Sciatic nerve (tissue), 2 donors: ENCODE measurements at regions of chrX and their contacts with region 1.

Region 1: DNA sequence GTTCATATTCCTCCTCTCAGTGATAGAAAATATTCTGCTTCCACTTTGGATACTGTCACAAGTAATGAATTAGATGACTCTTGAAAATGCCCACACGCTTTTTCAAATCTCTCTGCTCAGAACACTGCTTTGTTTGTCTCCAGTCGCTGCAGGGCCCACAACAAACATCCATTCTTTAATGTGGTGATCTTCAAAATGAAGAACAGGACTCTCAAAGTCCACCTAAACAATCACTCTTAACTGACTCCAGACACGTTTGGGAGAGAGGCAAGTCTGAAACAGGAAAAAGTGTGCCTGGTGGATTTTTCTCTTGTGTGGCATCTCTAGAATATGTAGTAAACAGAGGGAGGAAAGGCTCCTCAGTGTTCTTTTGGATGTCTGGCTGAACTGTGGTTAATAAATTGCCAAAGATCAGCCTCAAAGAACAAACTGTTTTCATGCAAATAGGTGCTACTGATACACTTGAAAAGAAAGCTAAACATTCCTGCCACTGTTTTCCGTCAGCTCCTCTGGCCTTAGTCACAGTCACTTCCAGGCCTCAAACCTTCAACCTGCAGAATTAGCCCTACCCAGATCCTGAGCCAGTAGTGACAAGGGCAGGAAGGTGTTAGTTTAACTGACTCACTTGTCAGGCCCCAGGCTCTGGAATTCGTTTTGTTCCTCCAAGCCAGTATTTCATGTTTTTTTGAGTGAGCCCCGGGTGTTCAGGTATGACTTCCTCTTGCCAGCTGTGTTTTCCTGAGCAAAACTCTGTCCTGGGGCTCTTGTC is 259.6 kb upstream of the GPC4 start:
- DNase-seq: no peak
- ATAC-seq: no peak

Region 2: GRCh38 chrX:133638285-133638684 is 36.6 kb before region 1 on chrX:
- intact Hi-C with region 1: no loop called
- DNase-seq: no peak
- ATAC-seq: no peak

Region 3: DNA sequence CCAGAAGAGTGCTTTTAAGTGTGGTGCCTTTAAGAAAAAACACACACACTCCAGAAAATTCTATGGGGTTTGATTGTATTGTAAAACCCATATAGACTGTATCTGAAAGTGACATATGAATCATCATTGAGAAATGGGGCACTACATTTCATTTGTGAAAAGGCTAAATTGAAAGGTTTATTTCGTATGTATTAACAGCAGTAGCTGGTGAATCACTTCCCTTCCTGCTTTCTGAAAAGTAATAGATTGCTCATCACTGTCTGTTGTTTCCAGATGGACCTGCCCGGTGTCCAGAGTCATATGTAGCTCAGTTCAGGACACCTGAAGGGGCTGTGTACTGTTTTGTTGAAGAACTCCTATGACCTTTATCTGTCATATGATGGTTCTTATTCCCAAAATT is 757.0 kb after region 1 on chrX:
- intact Hi-C with region 1: loop called (anchors 5 kb)
- DNase-seq: no peak
- ATAC-seq: no peak